ENCODE measurements at regions of chr7 and their contacts with region 1.

Region 1: GRCh38 chr7:111486472-111487142 is 75.7 kb downstream of the IMMP2L start:
- DNase-seq: peak; percentile 29
- ATAC-seq: peak; percentile 70
- H3K4me3 ChIP-seq: no peak overlapping the region
- H3K27ac ChIP-seq: no peak overlapping the region
- H3K4me1 ChIP-seq: no peaks in the 10 kb centered on the region
- H3K27me3 ChIP-seq: no peaks in the 10 kb centered on the region
- CTCF ChIP-seq: peak; percentile 49 to 84 (median 63); a peak in 5 of 6 replicates
- POLR2A ChIP-seq: no peak
- RAD21 ChIP-seq: peak; percentile 78

Region 2: DNA sequence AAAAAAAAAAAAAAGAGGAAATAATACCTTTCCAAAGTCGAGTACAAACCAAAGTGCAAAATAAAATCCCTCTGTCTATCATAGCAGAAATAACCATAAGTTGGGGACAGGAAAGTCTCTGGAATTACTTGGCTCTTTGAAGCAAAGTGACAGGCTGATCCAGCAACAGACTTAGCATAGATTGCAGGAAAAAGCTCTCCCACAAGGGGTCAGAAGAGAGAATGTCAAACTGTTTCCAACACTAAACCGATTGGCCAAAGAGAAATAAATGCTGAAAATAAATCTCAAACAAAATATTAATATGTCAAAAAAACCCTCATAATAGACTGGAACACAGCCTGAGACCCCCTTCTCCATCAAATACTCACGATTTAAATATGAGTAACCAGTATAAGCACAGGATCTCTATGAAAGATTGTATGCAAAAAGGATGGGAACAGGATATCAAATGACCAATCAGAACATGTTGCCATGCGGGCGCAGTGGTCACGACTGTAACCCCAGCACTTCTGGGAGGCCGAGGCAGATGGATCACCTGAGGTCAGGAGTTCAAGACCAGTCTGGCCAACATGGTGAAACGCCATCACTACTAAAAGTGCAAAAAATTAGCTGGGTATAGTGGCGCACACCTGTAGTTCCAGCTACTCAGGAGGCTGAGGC is 1396.4 kb before region 1 on chr7:
- CTCF ChIA-PET with region 1: no interaction called
- POLR2A ChIA-PET with region 1: no interaction called
- RAD21 ChIA-PET with region 1: no interaction called
- intact Hi-C with region 1: loop called (anchors 10 kb)
- DNase-seq: peak; percentile 38
- ATAC-seq: peak; percentile 81
- H3K4me3 ChIP-seq: no peak overlapping the region
- H3K27ac ChIP-seq: no peak overlapping the region
- H3K4me1 ChIP-seq: no peaks in the 10 kb centered on the region
- H3K27me3 ChIP-seq: no peaks in the 10 kb centered on the region
- CTCF ChIP-seq: peak; percentile 41 to 70 (median 65); a peak in 5 of 6 replicates
- POLR2A ChIP-seq: no peak
- RAD21 ChIP-seq: peak; percentile 61

Region 3: GRCh38 chr7:111089822-111090426 is 396.7 kb before region 1 on chr7:
- CTCF ChIA-PET with region 1: no interaction called
- POLR2A ChIA-PET with region 1: no interaction called
- RAD21 ChIA-PET with region 1: no interaction called
- intact Hi-C with region 1: loop called (anchors 2 kb)
- DNase-seq: peak; percentile 34
- ATAC-seq: peak; percentile 52
- H3K4me3 ChIP-seq: no peak overlapping the region
- H3K27ac ChIP-seq: no peak overlapping the region
- H3K4me1 ChIP-seq: no peaks in the 10 kb centered on the region
- H3K27me3 ChIP-seq: no peaks in the 10 kb centered on the region
- CTCF ChIP-seq: peak; percentile 30 to 79 (median 67); a peak in 5 of 6 replicates
- POLR2A ChIP-seq: no peak
- RAD21 ChIP-seq: peak; percentile 66

Region 4: DNA sequence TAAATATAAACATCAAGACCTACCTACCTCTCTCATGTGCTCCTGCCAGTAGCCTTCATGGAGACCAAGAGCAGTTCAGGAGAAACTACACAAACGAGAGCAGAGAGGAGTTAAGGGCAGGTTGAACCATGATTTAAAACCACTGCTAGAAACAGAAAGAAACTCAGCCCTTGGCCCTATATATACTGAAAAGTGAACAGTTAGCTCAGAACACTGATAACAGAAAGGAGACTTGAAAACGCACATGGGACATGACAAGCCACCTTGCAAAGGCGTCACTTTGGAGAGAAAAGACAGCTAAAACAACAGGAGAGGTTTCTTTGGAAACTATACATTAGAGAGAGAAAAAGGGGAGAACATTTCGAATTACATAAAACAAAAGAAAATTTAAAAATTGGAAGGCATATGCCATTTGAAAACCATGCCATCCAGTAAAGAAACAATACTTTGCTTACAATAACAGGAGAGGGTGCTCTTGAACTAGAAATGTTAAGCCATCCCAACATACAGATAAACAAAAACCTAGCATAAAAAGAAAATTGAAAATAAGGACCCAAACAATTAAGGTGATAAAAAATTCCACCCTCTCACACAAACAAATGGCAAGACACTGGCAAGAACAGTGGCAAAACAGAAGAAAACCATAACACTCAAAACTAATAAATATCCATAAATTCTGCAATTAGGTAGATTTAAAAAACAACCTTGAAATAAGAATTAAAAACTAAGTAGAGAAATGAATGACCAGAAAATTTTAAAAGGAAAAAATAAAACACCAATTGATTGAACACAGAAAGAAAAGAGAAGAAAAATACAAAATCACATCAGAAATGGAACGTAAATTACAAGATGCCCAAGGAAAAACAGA is 157.0 kb before region 1 on chr7:
- CTCF ChIA-PET with region 1: no interaction called
- POLR2A ChIA-PET with region 1: no interaction called
- RAD21 ChIA-PET with region 1: no interaction called
- intact Hi-C with region 1: loop called (anchors 5 kb)
- DNase-seq: no peak
- ATAC-seq: no peak
- H3K4me3 ChIP-seq: no peak overlapping the region
- H3K27ac ChIP-seq: no peak overlapping the region
- H3K4me1 ChIP-seq: no peaks in the 10 kb centered on the region
- H3K27me3 ChIP-seq: no peaks in the 10 kb centered on the region
- CTCF ChIP-seq: 0 out of 6 replicates have a peak, but pooled peaks of 1 of the 3 experiments have one; percentile 6
- POLR2A ChIP-seq: no peak
- RAD21 ChIP-seq: peak; percentile 38

Region 5: DNA sequence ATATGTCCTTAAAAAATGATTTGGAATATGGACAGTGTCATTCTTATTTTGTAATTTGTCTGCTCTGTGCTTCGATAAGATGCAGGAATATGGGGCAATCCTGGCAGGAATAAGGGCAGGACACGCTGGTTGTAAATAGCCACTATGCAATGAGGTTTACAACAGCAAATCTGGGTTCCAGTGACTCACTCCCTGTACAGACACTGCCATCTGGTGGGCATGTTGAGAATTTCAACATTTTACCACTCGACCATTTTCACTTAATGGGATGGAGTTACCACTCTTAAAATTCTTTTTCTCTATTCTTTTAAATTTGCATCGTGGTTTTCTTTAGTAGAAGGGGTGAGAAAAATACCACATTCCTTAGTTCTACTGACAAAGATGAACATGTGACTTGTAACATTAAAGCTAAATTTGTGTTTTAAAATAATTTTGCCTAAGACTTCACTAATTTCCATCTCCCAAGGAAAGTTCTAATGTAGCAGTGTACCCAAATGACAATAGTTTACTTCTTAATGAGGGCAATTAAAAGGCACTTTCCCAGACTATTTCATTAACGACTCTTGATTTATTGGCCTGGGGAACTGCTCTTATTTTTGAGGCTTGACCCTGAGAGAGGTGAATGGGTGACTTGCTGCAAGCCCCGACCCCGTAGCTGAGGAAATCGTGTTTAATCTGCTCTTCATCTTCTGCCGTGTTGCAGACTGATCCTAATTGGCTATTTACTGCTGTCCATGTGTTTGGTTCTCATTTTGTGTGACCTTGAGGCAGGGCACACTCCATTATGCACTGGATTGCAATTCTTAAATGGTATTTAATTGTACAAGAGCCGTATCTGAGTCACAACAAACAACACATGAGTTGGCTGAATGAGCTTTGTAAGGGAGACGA is 249.3 kb after region 1 on chr7:
- CTCF ChIA-PET with region 1: no interaction called
- POLR2A ChIA-PET with region 1: no interaction called
- RAD21 ChIA-PET with region 1: no interaction called
- intact Hi-C with region 1: loop called (anchors 10 kb)
- DNase-seq: peak; percentile 52
- ATAC-seq: peak; percentile 80
- H3K4me3 ChIP-seq: no peak overlapping the region
- H3K27ac ChIP-seq: no peak overlapping the region
- H3K4me1 ChIP-seq: no peaks in the 10 kb centered on the region
- H3K27me3 ChIP-seq: no peaks in the 10 kb centered on the region
- CTCF ChIP-seq: peak; percentile 59 to 88 (median 64)
- POLR2A ChIP-seq: no peak
- RAD21 ChIP-seq: peak; percentile 89

Measured in HCT116 (cell line).